PC-3 (cell line): ENCODE measurements at regions of chr6 and their contacts with region 1.

Region 1: GRCh38 chr6:57172136-57173055 is at the start of gene BAG2:
- DNase-seq: peak; percentile 89
- ATAC-seq: peak; percentile 82
- H3K4me3 ChIP-seq: peak within 1 kb of the TSS; percentile 92
- H3K27ac ChIP-seq: peak within 1 kb of the TSS; percentile 69
- H3K4me1 ChIP-seq: peaks cover 19% of the 10 kb centered on the region
- H3K27me3 ChIP-seq: no peaks in the 10 kb centered on the region
- CTCF ChIP-seq: no peak
- total RNA-seq, gene BAG2: 8.9 and 10.4 TPM in 2 replicates

Region 2: DNA sequence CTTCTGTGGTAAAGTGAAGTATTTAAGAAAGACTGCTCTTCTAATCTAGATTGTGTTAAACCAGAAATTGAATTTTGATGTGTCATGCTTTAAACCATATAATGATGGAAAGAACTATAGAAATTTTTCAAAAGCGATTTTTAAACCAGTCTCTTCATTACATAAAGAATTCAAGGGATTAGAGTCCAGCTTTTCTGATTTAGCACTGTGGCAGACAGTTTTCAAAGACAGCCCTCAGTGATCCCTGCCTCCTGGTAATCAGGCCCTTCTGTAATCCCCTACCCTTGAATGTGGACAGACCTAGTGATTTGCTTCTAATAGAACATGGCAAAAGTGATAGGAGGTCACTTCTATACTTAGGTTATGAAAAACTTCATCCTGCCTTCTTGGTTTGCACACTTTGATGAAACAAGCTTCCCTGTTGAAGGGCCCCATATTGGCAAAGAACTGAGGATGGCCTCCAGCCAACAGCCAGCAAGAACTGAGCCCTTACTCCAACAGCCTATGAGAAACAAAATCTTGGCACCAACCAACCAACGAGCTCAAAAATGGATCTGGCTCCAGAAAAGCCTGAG is 721.1 kb before region 1 on chr6:
- CTCF ChIA-PET with region 1: no interaction called
- POLR2A ChIA-PET with region 1: no interaction called
- intact Hi-C with region 1: no loop called
- DNase-seq: no peak
- ATAC-seq: no peak
- H3K4me3 ChIP-seq: no peak overlapping the region
- H3K27ac ChIP-seq: no peak overlapping the region
- H3K4me1 ChIP-seq: no peaks in the 10 kb centered on the region
- H3K27me3 ChIP-seq: no peaks in the 10 kb centered on the region
- CTCF ChIP-seq: no peak

Region 3: DNA sequence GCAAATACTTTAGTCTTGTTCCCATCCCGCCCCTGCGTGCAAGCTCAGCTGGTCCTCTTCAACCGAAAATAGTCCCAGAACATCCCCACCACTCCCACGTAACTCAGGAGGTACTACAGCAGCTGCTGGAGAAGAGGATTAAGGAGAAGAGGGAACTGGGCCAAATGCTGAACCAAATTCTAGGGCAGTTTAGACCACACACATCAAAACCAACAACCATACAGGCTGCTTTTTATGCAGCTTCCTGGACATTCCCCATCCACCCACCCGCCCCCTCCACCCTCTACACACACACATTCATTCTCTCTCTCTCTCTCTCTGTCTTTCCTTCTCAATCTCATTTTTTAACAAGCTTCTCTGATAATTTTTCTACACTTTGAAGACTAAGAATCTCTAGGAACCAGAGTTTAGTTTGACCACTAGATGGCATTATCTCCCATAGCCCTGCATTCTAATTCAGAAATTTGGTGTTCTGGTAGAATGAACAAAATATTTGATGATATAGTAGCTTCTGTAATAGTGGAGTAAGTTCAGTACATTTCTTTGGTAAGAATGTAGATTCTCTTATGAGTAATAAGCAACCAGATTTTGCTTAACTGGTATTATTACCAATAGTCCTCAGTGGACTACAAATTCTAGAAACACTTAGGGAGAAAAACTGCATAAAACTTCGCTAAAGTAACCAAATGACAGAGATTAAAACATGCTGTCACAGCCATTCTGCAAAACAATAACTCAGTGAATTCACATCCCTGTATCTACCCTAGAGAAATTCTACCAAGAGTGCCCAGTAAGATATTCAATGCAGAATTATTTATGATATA is 269.5 kb before region 1 on chr6:
- CTCF ChIA-PET with region 1: interaction called, 3 read pairs
- POLR2A ChIA-PET with region 1: no interaction called
- intact Hi-C with region 1: loop called (anchors 5 kb)
- DNase-seq: peak; percentile 72
- ATAC-seq: no peak
- H3K4me3 ChIP-seq: no peak overlapping the region
- H3K27ac ChIP-seq: no peak overlapping the region
- H3K4me1 ChIP-seq: peaks cover 35% of the 10 kb centered on the region
- H3K27me3 ChIP-seq: no peaks in the 10 kb centered on the region
- CTCF ChIP-seq: peak; percentile 94

Region 4: GRCh38 chr6:56955171-56956045 is 217.0 kb before region 1 on chr6:
- CTCF ChIA-PET with region 1: no interaction called
- POLR2A ChIA-PET with region 1: no interaction called
- intact Hi-C with region 1: loop called (anchors 2 kb)
- DNase-seq: peak; percentile 96
- ATAC-seq: peak; percentile 72
- H3K4me3 ChIP-seq: peak overlapping the region; percentile 77
- H3K27ac ChIP-seq: peak overlapping the region; percentile 31
- H3K4me1 ChIP-seq: peaks cover 58% of the 10 kb centered on the region
- H3K27me3 ChIP-seq: no peaks in the 10 kb centered on the region
- CTCF ChIP-seq: peak; percentile 83

Region 5: GRCh38 chr6:57048577-57048976 is 123.8 kb before region 1 on chr6:
- CTCF ChIA-PET with region 1: no interaction called
- POLR2A ChIA-PET with region 1: no interaction called
- intact Hi-C with region 1: loop called (anchors 5 kb)
- DNase-seq: peak; percentile 12
- ATAC-seq: no peak
- H3K4me3 ChIP-seq: peak overlapping the region; percentile 52
- H3K27ac ChIP-seq: no peak overlapping the region
- H3K4me1 ChIP-seq: peaks cover 20% of the 10 kb centered on the region
- H3K27me3 ChIP-seq: no peaks in the 10 kb centered on the region
- CTCF ChIP-seq: no peak

Region 6: DNA sequence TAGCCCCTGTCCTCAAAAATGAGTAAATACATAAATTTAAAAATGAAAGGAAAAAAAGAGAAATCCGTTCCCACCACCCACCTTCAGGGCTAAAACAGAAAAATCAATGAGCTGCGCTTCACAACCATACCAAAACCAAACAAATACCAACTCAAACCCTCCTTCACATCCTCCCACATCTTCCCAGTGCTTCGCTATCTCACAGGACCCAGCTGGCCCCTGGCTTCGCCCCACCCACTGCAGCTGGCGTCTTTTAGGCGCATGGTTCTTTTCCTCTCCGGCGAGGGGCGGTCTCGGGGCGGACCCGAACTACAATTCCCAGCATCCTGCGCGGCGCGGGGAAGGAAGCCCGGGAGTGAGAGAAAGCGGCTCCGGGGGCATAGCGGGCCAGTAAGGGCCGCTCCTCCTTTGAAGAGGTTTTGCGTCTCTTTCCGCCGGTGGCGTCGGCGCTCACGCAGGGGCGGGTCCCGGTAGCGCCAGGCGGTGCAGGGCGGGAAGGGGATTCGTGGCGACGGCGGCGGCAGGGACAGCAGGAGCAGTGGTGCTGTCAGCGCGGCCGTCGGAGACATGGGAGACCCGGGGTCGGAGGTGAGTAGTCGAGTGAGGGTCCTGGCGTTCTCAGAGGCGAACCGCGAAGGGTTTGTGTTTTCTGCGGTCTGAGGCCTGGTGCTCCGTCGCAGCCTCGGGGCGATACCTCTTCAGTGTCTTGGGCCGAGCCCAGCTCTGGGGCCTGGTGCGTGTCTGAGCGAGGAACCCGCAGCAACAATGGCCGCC is 82.5 kb before region 1 on chr6 and contains the start of gene ZNF451:
- CTCF ChIA-PET with region 1: no interaction called
- POLR2A ChIA-PET with region 1: no interaction called
- intact Hi-C with region 1: loop called (anchors 1 kb)
- DNase-seq: peak; percentile 97
- ATAC-seq: peak; percentile 93
- H3K4me3 ChIP-seq: peak within 1 kb of the TSS; percentile 72
- H3K27ac ChIP-seq: no peak within 1 kb of the TSS
- H3K4me1 ChIP-seq: peaks cover 29% of the 10 kb centered on the region
- H3K27me3 ChIP-seq: no peaks in the 10 kb centered on the region
- CTCF ChIP-seq: no peak
- total RNA-seq, gene ZNF451: 32.5 and 34.5 TPM in 2 replicates

Region 7: GRCh38 chr6:57130661-57131177 is 41.7 kb before region 1 on chr6:
- CTCF ChIA-PET with region 1: no interaction called
- POLR2A ChIA-PET with region 1: no interaction called
- intact Hi-C with region 1: no loop called
- DNase-seq: no peak
- ATAC-seq: no peak
- H3K4me3 ChIP-seq: no peak overlapping the region
- H3K27ac ChIP-seq: no peak overlapping the region
- H3K4me1 ChIP-seq: no peaks in the 10 kb centered on the region
- H3K27me3 ChIP-seq: no peaks in the 10 kb centered on the region
- CTCF ChIP-seq: no peak

Region 8: DNA sequence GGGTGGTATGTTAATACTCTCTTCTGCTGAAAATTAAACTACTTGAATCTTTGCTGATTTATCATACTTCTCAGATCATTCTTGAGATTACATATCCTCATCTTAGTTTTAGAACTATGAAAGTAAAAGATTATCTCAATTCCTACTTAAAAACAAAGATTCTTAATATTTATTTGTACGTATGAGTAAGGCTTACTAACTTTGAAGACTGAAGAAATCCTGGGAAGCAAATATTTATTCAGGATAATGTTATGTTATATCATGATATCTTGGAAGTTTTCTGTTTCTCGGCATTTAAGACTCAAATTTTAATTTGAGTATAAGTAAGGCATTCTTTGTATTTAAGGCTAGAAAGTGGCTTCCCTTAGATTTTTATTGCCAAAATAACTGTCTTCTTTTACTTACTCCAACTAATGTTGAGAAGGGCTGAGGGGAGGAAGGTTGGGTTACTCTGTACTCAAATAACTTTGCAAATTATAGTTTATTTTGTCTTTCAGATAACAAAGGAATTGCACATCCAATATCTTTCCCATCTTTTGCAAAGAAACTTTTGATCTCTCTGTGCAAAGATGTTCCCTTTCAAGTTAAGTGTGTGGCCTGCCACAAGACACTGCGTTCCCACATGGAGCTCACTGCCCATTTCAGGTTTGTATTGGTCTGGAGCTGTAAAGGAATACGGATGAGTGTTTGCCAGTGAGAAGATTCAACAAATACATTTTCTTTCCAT is 30.8 kb before region 1 on chr6:
- CTCF ChIA-PET with region 1: no interaction called
- POLR2A ChIA-PET with region 1: no interaction called
- intact Hi-C with region 1: loop called (anchors 1 kb)
- DNase-seq: peak; percentile 14
- ATAC-seq: peak; percentile 67
- H3K4me3 ChIP-seq: no peak overlapping the region
- H3K27ac ChIP-seq: 0 out of 2 replicates have a peak overlapping the region, but pooled peaks have one; percentile 8
- H3K4me1 ChIP-seq: peaks cover 4% of the 10 kb centered on the region; the same call in 1 of the 2 replicates
- H3K27me3 ChIP-seq: no peaks in the 10 kb centered on the region
- CTCF ChIP-seq: no peak

Region 9: DNA sequence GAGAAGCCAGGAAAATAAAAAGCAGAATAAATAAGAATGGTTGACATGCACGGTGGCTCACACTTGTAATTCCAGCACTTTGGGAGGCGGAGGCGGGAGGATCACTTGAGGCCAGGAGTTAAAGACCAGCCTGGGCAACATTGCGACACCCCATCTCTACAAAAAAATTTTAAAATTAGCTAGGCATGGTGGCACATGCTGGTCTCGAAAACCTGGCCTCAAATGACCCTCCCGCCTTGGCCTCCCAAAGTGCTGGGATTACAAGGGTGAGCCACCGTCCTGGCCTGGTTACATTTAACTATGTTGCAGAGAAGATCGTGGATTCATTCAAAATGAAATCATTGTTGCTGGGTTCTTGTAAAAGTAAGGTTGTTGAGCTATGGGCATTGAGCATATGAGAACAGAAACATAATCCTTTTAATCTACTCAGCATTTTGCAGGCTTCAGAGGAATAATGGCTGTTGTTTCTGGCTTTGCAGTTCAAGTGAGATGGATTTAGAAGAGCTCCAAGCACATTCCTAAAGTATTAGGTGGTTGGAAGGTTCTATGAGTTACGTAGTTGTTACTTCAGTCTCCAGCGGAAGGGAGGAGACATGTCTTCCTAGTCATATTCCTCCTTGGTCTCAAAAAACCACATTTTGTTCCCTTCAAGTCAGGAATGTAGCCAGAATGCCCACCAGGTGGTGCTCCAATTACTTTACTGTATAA is 95.3 kb after region 1 on chr6:
- CTCF ChIA-PET with region 1: no interaction called
- POLR2A ChIA-PET with region 1: no interaction called
- intact Hi-C with region 1: loop called (anchors 5 kb)
- DNase-seq: peak; percentile 97
- ATAC-seq: peak; percentile 96
- H3K4me3 ChIP-seq: no peak overlapping the region
- H3K27ac ChIP-seq: peak overlapping the region; percentile 70
- H3K4me1 ChIP-seq: peaks cover 40% of the 10 kb centered on the region
- H3K27me3 ChIP-seq: no peaks in the 10 kb centered on the region
- CTCF ChIP-seq: peak; percentile 90